ENCODE measurements at regions of chr11 and their contacts with region 1.

Region 1: DNA sequence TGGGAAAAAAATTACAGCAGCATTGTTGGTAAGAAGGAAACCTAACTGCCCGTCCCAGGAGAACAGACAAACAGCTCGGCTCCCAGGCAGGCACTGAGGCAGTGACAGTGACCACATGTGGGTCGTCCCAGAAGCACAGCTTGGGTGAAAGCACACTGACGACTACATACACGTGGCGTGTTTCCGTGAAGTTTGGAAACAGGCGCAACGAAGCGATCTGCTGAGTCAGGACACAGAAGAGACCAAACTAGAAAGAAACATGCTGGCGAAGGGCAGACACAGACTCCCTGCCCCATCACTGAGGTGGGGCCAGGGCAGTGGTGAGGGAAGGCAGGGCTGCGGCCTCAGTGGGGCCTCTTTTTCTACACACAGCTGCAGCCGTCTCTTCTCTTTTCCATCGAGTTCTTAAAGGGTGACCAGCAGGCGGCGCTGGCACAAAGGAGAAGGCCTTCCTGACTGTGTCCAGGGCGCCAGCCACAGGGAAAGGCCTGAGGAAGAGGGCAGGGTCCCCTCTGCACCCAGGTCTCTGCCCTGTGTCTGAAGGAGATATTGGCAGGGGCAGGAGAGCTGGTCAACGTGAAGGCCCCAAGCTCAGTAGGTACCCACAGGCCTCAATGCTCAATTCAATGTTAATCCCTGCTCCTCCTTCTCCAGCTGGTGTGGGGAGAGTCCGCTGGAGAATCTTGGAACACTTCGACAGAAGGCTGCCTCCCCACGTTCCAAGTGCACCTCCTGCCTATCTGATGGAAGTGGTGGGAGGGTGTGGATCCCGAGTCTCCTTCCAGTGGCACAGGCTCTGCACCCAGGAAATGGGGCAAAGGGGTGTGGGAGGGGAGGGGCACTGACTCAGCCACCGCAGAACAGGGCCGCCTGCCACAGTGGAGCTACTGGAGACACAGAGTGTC is 19.9 kb downstream of the CARS1 start:
- DNase-seq: peak; percentile 83 to 95 (median 92)
- ATAC-seq: peak; percentile 79 to 85
- H3K4me3 ChIP-seq: no peak overlapping the region
- H3K27ac ChIP-seq: no peak overlapping the region
- H3K4me1 ChIP-seq: no peaks in the 10 kb centered on the region
- H3K27me3 ChIP-seq: no peaks in the 10 kb centered on the region

Region 2: GRCh38 chr11:2945031-2945756 is 92.1 kb before region 1 on chr11:
- intact Hi-C with region 1: no loop called
- DNase-seq: peak; percentile 94 to 98 (median 96)
- ATAC-seq: peak; percentile 86 to 91
- H3K4me3 ChIP-seq: no peak overlapping the region
- H3K27ac ChIP-seq: peak overlapping the region; percentile 28
- H3K4me1 ChIP-seq: peaks cover 6% of the 10 kb centered on the region
- H3K27me3 ChIP-seq: no peaks in the 10 kb centered on the region

Region 3: DNA sequence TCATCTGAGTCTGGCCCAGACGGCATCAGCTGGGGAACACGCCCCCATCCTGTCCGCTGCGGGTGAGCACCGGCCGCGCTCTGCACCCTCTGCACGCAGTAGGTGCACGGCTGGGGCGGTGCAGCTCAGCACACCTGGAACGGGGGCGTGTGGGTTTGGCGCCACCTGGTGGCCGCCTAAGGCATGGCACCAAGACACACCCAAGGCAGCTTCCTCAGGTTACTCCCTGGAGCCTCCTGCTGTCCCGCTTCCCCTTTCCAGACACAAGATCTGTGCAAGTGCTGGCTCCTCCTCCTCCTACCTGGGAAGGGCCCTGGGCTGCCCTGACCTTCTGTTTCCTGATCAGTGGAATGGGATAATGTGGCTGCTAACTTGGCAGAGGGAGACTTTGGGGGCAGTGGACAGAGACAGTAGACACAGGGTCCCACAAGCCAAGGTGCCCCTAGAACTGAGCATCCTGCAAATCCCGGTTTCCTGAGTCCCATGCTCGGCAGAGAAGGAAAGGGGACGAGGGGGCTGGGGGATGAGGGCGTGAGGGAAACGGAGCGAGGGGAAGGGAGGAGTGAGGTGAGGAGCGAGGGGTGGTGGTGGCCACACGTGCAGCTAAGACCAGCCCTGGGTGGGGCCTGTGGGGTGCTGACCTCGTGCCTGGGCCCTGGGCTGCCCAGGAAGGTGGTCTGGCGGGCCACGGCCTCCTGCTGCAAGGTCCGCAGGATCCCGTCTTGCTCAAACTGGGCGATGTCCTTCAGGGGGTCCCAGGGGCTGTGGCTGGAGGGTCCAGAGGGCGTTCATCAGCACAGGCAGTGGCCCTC is 54.7 kb after region 1 on chr11:
- intact Hi-C with region 1: loop called (anchors 2 to 5 kb)
- DNase-seq: peak in 2 of 3 donors; percentile 82 to 85
- ATAC-seq: peak; percentile 44 to 61
- H3K4me3 ChIP-seq: no peak overlapping the region
- H3K27ac ChIP-seq: no peak overlapping the region
- H3K4me1 ChIP-seq: no peaks in the 10 kb centered on the region
- H3K27me3 ChIP-seq: no peaks in the 10 kb centered on the region